ENCODE measurements at regions of chr22 and their contacts with region 1.

Region 1: DNA sequence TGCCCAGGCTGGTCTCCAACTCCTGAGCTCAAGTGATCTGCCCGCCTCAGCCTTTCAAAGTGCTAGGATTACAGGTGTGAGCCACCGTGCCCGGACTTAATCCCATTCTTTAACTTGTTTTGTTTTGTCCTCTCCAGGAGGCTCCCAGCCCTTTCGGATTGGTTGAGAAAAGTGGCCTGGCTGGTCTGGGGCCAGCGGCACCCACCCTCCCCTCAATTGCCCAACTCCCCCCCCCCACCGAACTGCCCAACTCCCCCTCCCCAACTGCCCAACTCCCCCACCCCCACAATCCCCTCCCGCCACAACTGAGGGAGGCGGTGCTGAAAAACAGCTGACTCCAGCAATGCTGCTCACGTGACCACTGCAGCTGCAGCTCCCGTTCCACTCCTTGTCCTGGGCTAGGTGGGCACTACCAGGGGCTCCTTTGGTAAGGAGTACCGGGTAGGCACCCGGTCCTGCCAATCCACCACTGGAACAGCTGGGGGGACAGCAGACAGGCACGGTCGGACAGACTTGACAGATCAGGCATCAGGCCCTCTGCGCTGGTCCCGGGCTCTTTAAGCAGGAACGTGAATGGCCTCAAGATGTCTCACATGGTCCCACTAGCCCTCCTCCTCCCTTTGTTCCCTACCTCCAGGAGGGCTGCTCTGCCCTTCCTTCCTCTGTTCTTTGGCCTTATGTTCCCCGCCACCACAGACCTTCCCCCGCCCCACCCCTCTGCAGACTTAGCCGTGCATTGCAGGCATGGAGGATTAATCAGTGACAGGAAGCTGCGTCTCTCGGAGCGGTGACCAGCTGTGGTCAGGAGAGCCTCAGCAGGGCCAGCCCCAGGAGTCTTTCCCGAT is at the start of gene TCN2:
- DNase-seq: peak; percentile 63 to 69
- ATAC-seq: peak; percentile 87 to 88
- H3K4me3 ChIP-seq: peak within 1 kb of the TSS; percentile 68 to 84 (median 73)
- H3K27ac ChIP-seq: peak within 1 kb of the TSS; percentile 53 to 87 (median 76)
- H3K4me1 ChIP-seq: peaks cover 28 to 31% of the 10 kb centered on the region in 2 donors
- H3K27me3 ChIP-seq: no peaks in the 10 kb centered on the region
- CTCF ChIP-seq: peak in 1 of 5 experiments; percentile 29
- POLR2A ChIP-seq: peak; percentile 19 to 31
- total RNA-seq, gene TCN2: 5.1 to 12.8 (median 11.7) TPM

Region 2: GRCh38 chr22:30591588-30592359 is 14.9 kb before region 1 on chr22 and contains the start of gene PES1:
- in situ Hi-C with region 1: no loop called
- intact Hi-C with region 1: loop called (anchors 1 kb)
- DNase-seq: peak; percentile 90 to 94
- ATAC-seq: peak; percentile 100
- H3K4me3 ChIP-seq: peak within 1 kb of the TSS; percentile 62 to 94 (median 90)
- H3K27ac ChIP-seq: peak within 1 kb of the TSS; percentile 78 to 94 (median 86)
- H3K4me1 ChIP-seq: peaks cover 13 to 19% of the 10 kb centered on the region in 2 donors
- H3K27me3 ChIP-seq: no peaks in the 10 kb centered on the region
- CTCF ChIP-seq: no peak
- POLR2A ChIP-seq: peak; percentile 44 to 59
- total RNA-seq, gene PES1: 56.3 to 72.0 (median 65.8) TPM